B cell (primary cell): ENCODE measurements at regions of chr12 and their contacts with region 1.

Region 1: DNA sequence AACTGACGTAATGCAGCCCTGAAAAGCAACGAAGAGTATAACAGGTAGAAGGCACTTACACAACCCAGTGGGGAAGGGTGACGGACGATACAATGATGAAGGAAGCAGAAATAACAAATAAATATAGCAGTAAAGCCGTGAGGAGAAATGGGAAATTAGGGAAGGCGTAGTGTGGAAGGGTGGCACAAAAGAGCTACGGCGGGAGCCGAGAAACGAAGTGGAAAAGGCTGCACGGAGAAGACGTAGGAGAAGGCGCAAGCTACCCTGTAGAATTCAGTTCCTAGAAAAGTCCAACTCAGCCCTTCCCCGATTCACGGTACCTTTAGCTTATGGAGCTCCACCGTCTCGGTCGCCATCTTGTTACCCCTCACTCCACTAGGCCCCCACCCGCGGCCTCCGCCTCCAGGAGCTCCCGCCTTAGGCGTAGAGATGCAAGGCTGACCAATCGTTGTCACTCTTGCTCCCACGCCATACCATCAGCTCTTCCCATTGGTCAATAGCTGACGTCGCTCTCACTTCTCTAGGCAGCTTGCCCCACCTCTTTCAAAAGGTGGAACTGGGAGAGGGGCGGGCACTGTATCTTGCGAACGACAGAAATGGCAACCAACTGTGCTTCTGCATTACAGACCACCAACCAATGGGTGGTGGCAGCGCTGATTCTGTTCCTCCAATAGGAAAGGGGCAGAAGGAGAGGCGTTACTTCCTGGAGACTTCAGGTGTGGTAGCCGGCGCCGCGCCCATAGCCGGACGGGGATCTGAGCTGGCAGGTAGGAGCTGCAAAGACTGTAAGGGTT is at the starts of genes ORMDL2 and SARNP:
- DNase-seq: peak; percentile 99
- ATAC-seq: peak; percentile 92
- H3K4me3 ChIP-seq: peak within 1 kb of the TSS; percentile 81 to 100 (median 94)
- H3K4me3 Mint-ChIP-seq: no peak within 1 kb of the TSS
- H3K27ac ChIP-seq: peak within 1 kb of the TSS; percentile 50 to 84
- H3K27ac Mint-ChIP-seq: no peak within 1 kb of the TSS
- H3K4me1 ChIP-seq: peaks cover 24 to 30% of the 10 kb centered on the region in 2 donors
- H3K4me1 Mint-ChIP-seq: peaks cover 30% of the 10 kb centered on the region
- H3K27me3 ChIP-seq: no peaks in the 10 kb centered on the region
- H3K27me3 Mint-ChIP-seq: no peaks in the 10 kb centered on the region
- CTCF ChIP-seq: no peak
- total RNA-seq, gene ORMDL2: 41.9 and 43.1 TPM in 2 replicates
- total RNA-seq, gene SARNP: 42.8 and 46.4 TPM in 2 replicates

Region 2: DNA sequence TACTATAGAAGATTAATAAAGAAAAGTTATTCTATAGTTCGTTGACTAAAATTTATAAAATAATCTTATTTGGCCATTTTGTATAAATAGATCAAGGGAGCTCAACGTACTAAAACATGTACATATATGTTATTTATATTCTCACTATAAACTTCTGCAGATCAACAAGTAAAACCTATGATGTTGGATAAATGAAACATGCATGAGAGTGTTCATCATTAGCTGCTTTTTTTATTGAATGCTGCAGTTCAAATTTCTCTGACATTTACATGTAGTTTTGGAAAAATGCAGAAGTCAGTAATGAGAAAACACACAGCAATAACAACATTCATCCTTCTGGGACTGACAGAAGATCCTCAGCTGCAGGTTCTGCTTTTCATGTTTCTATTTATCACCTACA is 325.5 kb before region 1 on chr12 and contains the start of gene OR6C68:
- CTCF ChIA-PET with region 1: no interaction called
- POLR2A ChIA-PET with region 1: no interaction called
- intact Hi-C with region 1: no loop called
- DNase-seq: no peak
- ATAC-seq: no peak
- H3K4me3 ChIP-seq: no peak within 1 kb of the TSS
- H3K4me3 Mint-ChIP-seq: no peak within 1 kb of the TSS
- H3K27ac ChIP-seq: no peak within 1 kb of the TSS
- H3K27ac Mint-ChIP-seq: no peak within 1 kb of the TSS
- H3K4me1 ChIP-seq: no peaks in the 10 kb centered on the region
- H3K4me1 Mint-ChIP-seq: no peaks in the 10 kb centered on the region
- H3K27me3 ChIP-seq: no peaks in the 10 kb centered on the region
- H3K27me3 Mint-ChIP-seq: no peaks in the 10 kb centered on the region
- CTCF ChIP-seq: no peak
- total RNA-seq, gene OR6C68: not detected in 2 replicates

Region 3: GRCh38 chr12:55829967-55830600 is 12.5 kb after region 1 on chr12:
- CTCF ChIA-PET with region 1: interaction called, 39 read pairs
- POLR2A ChIA-PET with region 1: interaction called, 53 read pairs
- intact Hi-C with region 1: loop called (anchors 1 kb)
- DNase-seq: peak; percentile 65
- ATAC-seq: peak; percentile 4
- H3K4me3 ChIP-seq: peak overlapping the region; percentile 68 to 96 (median 84)
- H3K4me3 Mint-ChIP-seq: peak overlapping the region; percentile 99
- H3K27ac ChIP-seq: peak overlapping the region; percentile 57 to 60
- H3K27ac Mint-ChIP-seq: peak overlapping the region; percentile 97
- H3K4me1 ChIP-seq: peaks cover 36 to 49% of the 10 kb centered on the region in 2 donors
- H3K4me1 Mint-ChIP-seq: peaks cover 48% of the 10 kb centered on the region
- H3K27me3 ChIP-seq: no peaks in the 10 kb centered on the region
- H3K27me3 Mint-ChIP-seq: no peaks in the 10 kb centered on the region
- CTCF ChIP-seq: no peak

Region 4: GRCh38 chr12:55940065-55940732 is 122.7 kb after region 1 on chr12:
- CTCF ChIA-PET with region 1: interaction called, 25 read pairs
- POLR2A ChIA-PET with region 1: interaction called, 3 read pairs
- intact Hi-C with region 1: loop called (anchors 1 kb)
- DNase-seq: peak; percentile 89
- ATAC-seq: peak; percentile 99
- H3K4me3 ChIP-seq: no peak overlapping the region
- H3K4me3 Mint-ChIP-seq: peak overlapping the region; percentile 13
- H3K27ac ChIP-seq: peak overlapping the region; percentile 35 to 57
- H3K27ac Mint-ChIP-seq: peak overlapping the region; percentile 84
- H3K4me1 ChIP-seq: peaks cover 7 to 12% of the 10 kb centered on the region in 2 donors
- H3K4me1 Mint-ChIP-seq: peaks cover 19% of the 10 kb centered on the region
- H3K27me3 ChIP-seq: no peaks in the 10 kb centered on the region
- H3K27me3 Mint-ChIP-seq: no peaks in the 10 kb centered on the region
- CTCF ChIP-seq: peak; percentile 85

Region 5: GRCh38 chr12:56104109-56104814 is 286.7 kb after region 1 on chr12 and contains the start of gene PA2G4:
- CTCF ChIA-PET with region 1: no interaction called
- POLR2A ChIA-PET with region 1: no interaction called
- intact Hi-C with region 1: loop called (anchors 1 kb)
- DNase-seq: peak; percentile 95
- ATAC-seq: peak; percentile 89
- H3K4me3 ChIP-seq: peak within 1 kb of the TSS; percentile 56 to 93 (median 86)
- H3K4me3 Mint-ChIP-seq: peak within 1 kb of the TSS; percentile 100
- H3K27ac ChIP-seq: peak within 1 kb of the TSS; percentile 66 to 67
- H3K27ac Mint-ChIP-seq: peak within 1 kb of the TSS; percentile 92
- H3K4me1 ChIP-seq: peaks cover 18 to 23% of the 10 kb centered on the region in 2 donors
- H3K4me1 Mint-ChIP-seq: peaks cover 38% of the 10 kb centered on the region
- H3K27me3 ChIP-seq: no peaks in the 10 kb centered on the region
- H3K27me3 Mint-ChIP-seq: no peaks in the 10 kb centered on the region
- CTCF ChIP-seq: no peak
- total RNA-seq, gene PA2G4: 77.3 and 84.6 TPM in 2 replicates